HCT116 (cell line): ENCODE measurements at regions of chr7 and their contacts with region 1.

Region 1: DNA sequence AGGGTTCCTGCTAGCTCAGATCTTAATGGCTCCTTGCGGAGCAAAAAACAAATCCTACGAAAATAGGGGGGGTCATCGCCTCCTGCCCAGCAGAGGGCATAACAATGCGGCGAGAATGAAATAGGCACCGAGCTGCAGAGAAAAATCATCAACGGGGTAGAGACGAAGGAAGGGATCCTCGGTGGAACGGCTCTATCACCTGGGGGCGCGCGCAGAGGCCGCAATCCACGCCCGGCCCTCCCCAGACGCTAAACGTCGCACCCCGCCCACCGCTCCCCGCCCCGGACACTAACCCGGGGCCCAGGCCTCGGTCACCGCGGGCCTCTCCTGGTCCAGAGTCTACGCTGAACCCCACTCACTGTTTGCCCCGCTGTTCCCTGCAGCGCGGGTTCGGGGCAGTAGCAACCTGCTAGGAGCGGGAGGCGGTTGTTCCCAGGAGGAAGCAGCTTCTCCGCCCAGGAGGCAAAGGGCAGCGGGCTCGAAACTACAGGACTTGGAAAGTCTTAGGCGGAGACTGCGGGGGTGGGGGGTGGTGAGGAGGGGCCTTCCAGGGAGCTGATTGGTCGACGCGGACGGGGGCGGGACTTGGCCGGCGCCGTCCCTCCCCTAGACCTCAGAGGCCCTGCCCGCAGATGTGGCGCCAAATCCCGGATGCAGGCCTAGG is at the start of gene TCAF1:
- DNase-seq: peak; percentile 91
- ATAC-seq: peak; percentile 93
- H3K4me3 ChIP-seq: peak within 1 kb of the TSS; percentile 86 to 91
- H3K27ac ChIP-seq: peak within 1 kb of the TSS; percentile 83
- H3K4me1 ChIP-seq: peaks cover 8 to 18% of the 10 kb centered on the region in 2 experiments
- H3K27me3 ChIP-seq: no peaks in the 10 kb centered on the region
- CTCF ChIP-seq: peak; percentile 21 to 42 (median 36); a peak in 4 of 6 replicates
- POLR2A ChIP-seq: peak; percentile 23
- RAD21 ChIP-seq: peak; percentile 34; the same call in 1 of the 2 replicates
- total RNA-seq, gene TCAF1: 58.4 TPM

Region 2: GRCh38 chr7:144027070-144027469 is 125.3 kb after region 1 on chr7:
- CTCF ChIA-PET with region 1: interaction called, 6 read pairs
- POLR2A ChIA-PET with region 1: no interaction called
- RAD21 ChIA-PET with region 1: no interaction called
- intact Hi-C with region 1: loop called (anchors 10 kb)
- DNase-seq: peak; percentile 28
- ATAC-seq: peak; percentile 70
- H3K4me3 ChIP-seq: no peak overlapping the region
- H3K27ac ChIP-seq: no peak overlapping the region
- H3K4me1 ChIP-seq: peaks cover 0 to 6% of the 10 kb centered on the region in 2 experiments; a peak in 2 of 4 replicates
- H3K27me3 ChIP-seq: no peaks in the 10 kb centered on the region
- CTCF ChIP-seq: peak; percentile 32 to 72 (median 59); a peak in 4 of 6 replicates
- POLR2A ChIP-seq: no peak
- RAD21 ChIP-seq: peak; percentile 85